Mammary epithelial cell (primary cell): ENCODE measurements at regions of chr11 and their contacts with region 1.

Region 1: DNA sequence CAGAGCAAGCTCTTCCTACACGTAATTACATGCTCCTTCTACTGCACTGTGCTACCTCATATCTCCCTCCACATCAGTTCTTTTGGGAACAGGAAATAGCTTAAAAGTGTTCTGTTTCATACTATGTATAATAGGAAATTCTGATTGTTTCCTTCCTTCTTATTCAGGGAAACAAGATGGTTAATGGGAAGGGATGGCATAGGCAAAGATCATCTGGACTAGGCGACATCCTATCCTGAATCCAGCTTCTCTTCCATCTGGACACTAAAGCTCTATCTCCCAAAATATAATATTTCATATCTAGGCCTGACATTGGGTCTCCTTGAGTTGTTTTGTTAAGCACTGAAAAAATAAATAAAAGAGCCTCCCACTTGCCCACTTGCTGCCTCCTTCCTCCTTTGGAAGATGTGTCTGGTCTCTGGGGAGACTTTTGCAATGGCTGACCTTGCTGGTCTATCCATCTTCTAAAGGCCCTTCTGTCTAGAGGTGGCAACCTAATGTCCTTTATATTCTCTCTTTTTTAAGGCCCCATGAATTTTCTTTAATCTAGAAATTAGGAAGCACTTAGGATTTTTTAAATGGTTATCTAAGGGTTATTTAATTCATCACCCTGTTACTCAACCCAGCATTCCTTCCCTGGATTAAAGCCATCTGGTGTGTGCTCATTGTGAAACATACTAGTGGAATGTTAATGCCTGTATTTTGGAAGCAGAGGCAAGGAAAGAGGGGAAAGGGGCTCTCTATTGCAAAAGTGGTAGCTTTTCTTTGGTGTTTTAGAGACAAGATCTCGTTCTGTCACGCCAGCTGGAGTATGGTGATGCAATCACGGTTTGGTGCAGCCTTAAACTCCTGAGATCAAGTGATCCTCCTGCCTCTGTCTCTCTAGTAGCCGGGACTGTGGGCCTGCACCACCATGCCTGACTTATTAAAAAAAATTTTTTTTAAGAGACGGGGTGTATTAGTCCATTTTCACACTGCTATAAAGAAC is 20.6 kb downstream of the CLMP start:
- DNase-seq: peak; percentile 77
- H3K4me3 ChIP-seq: no peak overlapping the region
- H3K27ac ChIP-seq: peak overlapping the region; percentile 71
- H3K4me1 ChIP-seq: peaks cover 32% of the 10 kb centered on the region
- H3K27me3 ChIP-seq: no peaks in the 10 kb centered on the region
- CTCF ChIP-seq: no peak

Region 2: DNA sequence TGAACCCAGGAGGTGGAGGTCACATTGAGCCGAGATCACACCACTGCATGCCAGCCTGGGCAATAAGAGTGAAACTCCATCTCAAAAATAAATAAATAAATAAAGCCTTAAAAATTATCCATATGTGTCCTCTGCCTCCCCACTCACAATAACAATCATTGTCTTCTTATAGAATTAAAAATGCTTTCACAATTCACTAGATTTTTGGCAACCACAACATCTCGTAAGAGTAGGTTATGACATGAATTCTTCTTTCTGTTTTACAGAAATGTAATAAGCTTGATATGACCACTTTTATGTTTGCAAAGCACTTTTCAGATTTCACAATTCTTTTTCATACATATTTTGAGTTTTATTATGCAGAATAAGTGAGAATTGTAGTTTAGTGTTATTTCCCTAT is 58.0 kb before region 1 on chr11:
- CTCF ChIA-PET with region 1: no interaction called
- dilution Hi-C with region 1: loop called (anchors 5 kb)
- in situ Hi-C with region 1: no loop called
- intact Hi-C with region 1: no loop called
- DNase-seq: peak; percentile 48
- H3K4me3 ChIP-seq: no peak overlapping the region
- H3K27ac ChIP-seq: no peak overlapping the region
- H3K4me1 ChIP-seq: peaks cover 15% of the 10 kb centered on the region
- H3K27me3 ChIP-seq: no peaks in the 10 kb centered on the region
- CTCF ChIP-seq: no peak

Region 3: GRCh38 chr11:123211149-123211852 is 36.8 kb after region 1 on chr11:
- CTCF ChIA-PET with region 1: no interaction called
- dilution Hi-C with region 1: loop called (anchors 5 kb)
- in situ Hi-C with region 1: no loop called
- intact Hi-C with region 1: no loop called
- DNase-seq: no peak
- H3K4me3 ChIP-seq: no peak overlapping the region
- H3K27ac ChIP-seq: no peak overlapping the region
- H3K4me1 ChIP-seq: peaks cover 8% of the 10 kb centered on the region
- H3K27me3 ChIP-seq: no peaks in the 10 kb centered on the region
- CTCF ChIP-seq: no peak